Vagina (tissue), 2 donors: ENCODE measurements at regions of chr1 and their contacts with region 1.

Region 1: GRCh38 chr1:182643706-182644105 is 39.5 kb upstream of the RGS16 start:
- DNase-seq: no peak
- H3K4me3 ChIP-seq: no peak overlapping the region
- H3K27ac ChIP-seq: no peak overlapping the region
- H3K4me1 ChIP-seq: no peaks in the 10 kb centered on the region
- H3K27me3 ChIP-seq: no peaks in the 10 kb centered on the region
- CTCF ChIP-seq: no peak
- POLR2A ChIP-seq: no peak

Region 2: DNA sequence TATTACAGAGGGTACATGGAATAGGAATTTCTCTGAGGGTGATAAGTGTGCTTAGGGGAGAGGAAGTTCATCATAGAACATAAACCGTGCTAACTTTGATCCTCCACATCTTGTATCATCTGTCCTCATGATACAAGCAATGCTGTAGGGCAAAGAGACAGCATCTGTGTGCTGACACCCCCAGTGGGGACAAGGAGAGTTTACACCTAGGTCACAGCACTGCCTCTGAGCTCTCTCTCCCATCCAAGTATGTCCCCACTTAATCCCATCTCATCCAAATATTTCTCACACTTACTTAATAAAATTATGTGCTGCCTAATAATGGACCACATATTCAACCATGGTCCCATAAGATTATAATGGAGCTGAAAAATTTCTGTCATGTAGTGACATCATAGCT is 238.9 kb before region 1 on chr1:
- intact Hi-C with region 1: no loop called
- DNase-seq: no peak
- H3K4me3 ChIP-seq: no peak overlapping the region
- H3K27ac ChIP-seq: no peak overlapping the region
- H3K4me1 ChIP-seq: no peaks in the 10 kb centered on the region
- H3K27me3 ChIP-seq: no peaks in the 10 kb centered on the region
- CTCF ChIP-seq: no peak
- POLR2A ChIP-seq: no peak

Region 3: GRCh38 chr1:182614796-182615454 is 28.8 kb before region 1 on chr1:
- intact Hi-C with region 1: no loop called
- DNase-seq: no peak
- H3K4me3 ChIP-seq: peak overlapping the region; percentile 52 to 54
- H3K27ac ChIP-seq: peak overlapping the region; percentile 93
- H3K4me1 ChIP-seq: peaks cover 31% of the 10 kb centered on the region
- H3K27me3 ChIP-seq: no peaks in the 10 kb centered on the region
- CTCF ChIP-seq: no peak
- POLR2A ChIP-seq: no peak

Region 4: DNA sequence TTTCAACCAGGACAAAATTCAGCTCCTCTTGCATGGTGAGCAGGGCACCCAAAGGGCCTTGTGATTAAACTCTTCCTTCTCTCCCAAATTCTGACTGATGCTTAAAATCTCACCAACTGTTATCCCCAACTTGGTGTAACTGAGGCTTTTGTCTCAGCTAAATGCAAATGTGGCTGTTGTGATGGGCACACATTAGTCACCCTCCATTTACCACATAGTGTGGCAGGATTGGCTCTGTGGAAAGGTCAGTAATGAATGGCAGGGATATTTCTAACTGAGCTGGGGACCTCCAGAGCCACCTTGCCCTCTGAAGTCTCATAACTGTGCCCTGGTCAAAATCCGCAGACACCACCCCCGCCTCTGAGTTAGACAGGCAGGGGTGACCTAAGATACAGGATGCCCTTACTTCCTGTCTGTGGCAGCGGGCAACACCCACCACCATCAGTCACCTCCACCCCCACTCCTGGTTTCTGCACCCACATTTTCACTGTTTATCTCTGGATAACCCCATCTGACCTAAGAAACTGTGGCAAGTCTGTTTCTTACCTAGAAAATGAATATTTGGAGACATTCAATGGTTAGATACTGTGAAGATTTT is 14.1 kb before region 1 on chr1:
- intact Hi-C with region 1: no loop called
- DNase-seq: no peak
- H3K4me3 ChIP-seq: no peak overlapping the region
- H3K27ac ChIP-seq: no peak overlapping the region
- H3K4me1 ChIP-seq: peaks cover 12% of the 10 kb centered on the region
- H3K27me3 ChIP-seq: no peaks in the 10 kb centered on the region
- CTCF ChIP-seq: no peak
- POLR2A ChIP-seq: no peak

Region 5: GRCh38 chr1:182668521-182669054 is 24.9 kb after region 1 on chr1:
- intact Hi-C with region 1: loop called (anchors 1 kb)
- DNase-seq: no peak
- H3K4me3 ChIP-seq: no peak overlapping the region
- H3K27ac ChIP-seq: no peak overlapping the region
- H3K4me1 ChIP-seq: no peaks in the 10 kb centered on the region
- H3K27me3 ChIP-seq: no peaks in the 10 kb centered on the region
- CTCF ChIP-seq: no peak
- POLR2A ChIP-seq: no peak

Region 6: DNA sequence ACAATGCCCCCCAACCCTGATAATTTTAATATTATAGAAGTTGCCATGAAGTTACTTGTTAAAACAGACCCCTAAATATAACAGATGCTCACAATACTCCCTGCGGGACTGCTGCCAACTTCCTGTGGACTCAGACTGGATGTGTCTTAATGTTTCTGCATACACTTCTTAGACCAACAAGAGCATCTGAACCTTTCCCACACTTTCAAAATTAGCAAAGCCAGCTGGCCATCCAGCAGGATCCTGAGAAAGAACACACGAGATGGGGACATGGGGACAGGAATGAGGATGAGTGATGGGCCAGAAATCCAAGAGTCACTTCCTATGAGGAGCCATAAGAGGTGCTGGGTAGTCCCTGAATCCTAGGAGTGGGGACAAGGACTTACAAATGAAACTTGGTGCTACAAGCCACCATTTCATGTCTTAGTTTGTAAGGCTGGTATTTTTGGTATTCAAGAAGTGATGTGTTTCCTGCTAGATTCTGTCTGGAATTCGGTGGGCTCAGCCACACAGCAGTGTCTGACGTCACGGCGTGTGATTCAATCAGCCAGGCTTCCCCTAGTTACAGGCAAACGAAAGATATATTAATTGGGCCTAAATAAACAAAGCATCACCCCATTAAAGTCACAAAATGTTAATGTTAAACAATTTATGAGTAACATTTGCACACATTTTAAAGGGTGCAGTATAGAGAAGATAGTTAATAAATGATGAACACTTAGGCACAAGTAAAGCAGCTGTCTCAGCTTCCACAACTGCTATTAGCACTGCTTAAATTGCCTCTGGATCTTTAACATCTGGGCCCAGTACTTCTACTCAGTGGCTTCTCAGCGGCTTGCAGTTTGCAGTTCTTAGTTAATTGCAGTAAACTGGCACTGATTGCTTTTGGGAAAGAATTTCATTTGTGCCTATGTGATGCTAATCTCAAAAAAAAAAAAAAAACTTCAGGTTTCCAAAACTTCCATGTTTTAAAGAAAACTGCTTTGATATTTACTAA is 81.9 kb after region 1 on chr1:
- intact Hi-C with region 1: no loop called
- DNase-seq: no peak
- H3K4me3 ChIP-seq: no peak overlapping the region
- H3K27ac ChIP-seq: no peak overlapping the region
- H3K4me1 ChIP-seq: no peaks in the 10 kb centered on the region
- H3K27me3 ChIP-seq: no peaks in the 10 kb centered on the region
- CTCF ChIP-seq: no peak
- POLR2A ChIP-seq: no peak